Activated naive CD4-positive, alpha-beta T cell treated with anti-CD3 and anti-CD28 coated beads for 36 hours (primary cell): ENCODE measurements at regions of chr1 and their contacts with region 1.

Region 1: GRCh38 chr1:172154551-172154950 is 265.9 kb upstream of the C1orf105 start:
- DNase-seq: no peak
- H3K4me3 Mint-ChIP-seq: no peak overlapping the region
- H3K27ac Mint-ChIP-seq: peak overlapping the region; percentile 82
- H3K4me1 Mint-ChIP-seq: peaks cover 9% of the 10 kb centered on the region
- H3K27me3 Mint-ChIP-seq: no peaks in the 10 kb centered on the region

Region 2: DNA sequence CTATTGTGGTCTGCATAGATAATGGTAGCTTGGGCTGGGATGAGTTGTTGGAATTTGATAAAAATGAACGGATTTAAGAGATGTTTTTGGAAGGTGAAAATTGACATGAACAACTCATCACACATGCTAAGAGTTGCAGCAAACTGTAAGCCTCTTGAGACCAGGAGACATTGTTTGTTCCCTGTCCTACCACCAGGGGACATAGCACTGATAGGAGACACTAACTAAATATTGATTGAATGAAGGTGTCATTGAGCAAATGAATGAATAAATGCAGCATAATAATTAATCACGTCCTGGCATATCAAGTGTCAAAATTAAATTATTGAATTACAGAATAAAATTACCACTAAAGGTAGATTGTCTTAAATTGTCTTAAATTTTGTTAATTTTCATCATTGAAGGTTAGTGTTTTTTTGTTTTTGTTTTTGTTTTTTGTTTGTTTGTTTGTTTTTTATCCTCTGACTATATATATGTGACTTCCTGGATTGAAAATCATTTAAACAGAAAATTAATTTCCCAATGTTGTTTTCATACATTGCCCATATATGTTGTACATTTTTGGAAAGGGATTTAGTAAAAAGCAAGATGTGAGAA is 19.4 kb before region 1 on chr1:
- CTCF ChIA-PET with region 1: interaction called, 4 read pairs
- intact Hi-C with region 1: loop called (anchors 1 kb)
- DNase-seq: peak; percentile 43
- H3K4me3 Mint-ChIP-seq: no peak overlapping the region
- H3K27ac Mint-ChIP-seq: no peak overlapping the region
- H3K4me1 Mint-ChIP-seq: peaks cover 17% of the 10 kb centered on the region
- H3K27me3 Mint-ChIP-seq: no peaks in the 10 kb centered on the region